ENCODE measurements at regions of chr4 and their contacts with region 1.

Region 1: DNA sequence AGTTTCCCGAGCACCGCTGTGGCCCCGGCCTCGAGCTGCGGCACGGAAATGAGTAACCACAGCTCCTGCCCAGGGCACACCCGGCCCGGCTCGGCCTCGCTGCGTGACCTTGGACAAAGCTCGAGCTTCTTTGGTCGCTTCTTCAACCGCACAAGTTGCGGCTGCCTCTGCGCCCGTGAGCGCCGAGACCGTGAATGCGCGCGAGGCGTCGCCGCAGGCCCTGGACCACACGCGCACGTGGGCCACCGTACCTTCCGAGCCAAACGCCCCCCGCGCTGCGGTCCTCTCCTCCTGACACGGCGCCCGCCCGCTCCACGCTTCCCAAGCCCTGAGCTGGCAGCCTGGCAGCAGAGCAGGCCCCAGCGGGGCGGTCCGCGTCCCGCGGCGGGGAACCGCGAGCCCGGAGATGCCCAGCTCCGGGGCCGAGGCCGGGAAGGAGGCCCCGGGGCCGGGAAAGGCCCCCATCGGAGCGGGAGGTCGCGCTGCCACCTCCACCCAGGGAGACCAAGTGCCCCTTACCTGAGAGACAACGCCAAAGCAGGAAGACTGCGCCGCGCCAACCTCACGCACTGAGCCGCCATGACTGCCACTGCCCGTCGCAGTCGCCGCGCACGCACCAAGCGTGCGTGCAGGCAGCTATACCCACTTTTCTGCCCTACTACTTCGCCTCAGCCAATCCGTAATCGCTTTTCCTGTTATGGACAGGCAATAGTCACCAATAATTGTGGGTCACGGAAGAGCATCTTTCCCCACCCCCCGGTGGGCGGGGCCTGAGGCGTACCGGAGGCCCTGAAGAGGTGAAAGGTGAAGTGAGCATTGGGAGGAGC is at the start of gene GRPEL1:
- DNase-seq: peak; percentile 99
- CTCF ChIP-seq: no peak

Region 2: GRCh38 chr4:6574747-6575502 is 492.7 kb before region 1 on chr4 and contains the start of gene MAN2B2:
- in situ Hi-C with region 1: no loop called
- DNase-seq: peak; percentile 98
- CTCF ChIP-seq: no peak

Region 3: GRCh38 chr4:6709230-6710114 is 358.2 kb before region 1 on chr4 and contains the start of gene MRFAP1L1:
- in situ Hi-C with region 1: loop called (anchors 10 kb)
- DNase-seq: peak; percentile 94
- CTCF ChIP-seq: no peak

Region 4: GRCh38 chr4:6829086-6829485 is 238.6 kb before region 1 on chr4:
- in situ Hi-C with region 1: no loop called
- DNase-seq: no peak
- CTCF ChIP-seq: no peak

Region 5: GRCh38 chr4:6840062-6840976 is 227.3 kb before region 1 on chr4:
- in situ Hi-C with region 1: no loop called
- DNase-seq: no peak
- CTCF ChIP-seq: no peak

Region 6: DNA sequence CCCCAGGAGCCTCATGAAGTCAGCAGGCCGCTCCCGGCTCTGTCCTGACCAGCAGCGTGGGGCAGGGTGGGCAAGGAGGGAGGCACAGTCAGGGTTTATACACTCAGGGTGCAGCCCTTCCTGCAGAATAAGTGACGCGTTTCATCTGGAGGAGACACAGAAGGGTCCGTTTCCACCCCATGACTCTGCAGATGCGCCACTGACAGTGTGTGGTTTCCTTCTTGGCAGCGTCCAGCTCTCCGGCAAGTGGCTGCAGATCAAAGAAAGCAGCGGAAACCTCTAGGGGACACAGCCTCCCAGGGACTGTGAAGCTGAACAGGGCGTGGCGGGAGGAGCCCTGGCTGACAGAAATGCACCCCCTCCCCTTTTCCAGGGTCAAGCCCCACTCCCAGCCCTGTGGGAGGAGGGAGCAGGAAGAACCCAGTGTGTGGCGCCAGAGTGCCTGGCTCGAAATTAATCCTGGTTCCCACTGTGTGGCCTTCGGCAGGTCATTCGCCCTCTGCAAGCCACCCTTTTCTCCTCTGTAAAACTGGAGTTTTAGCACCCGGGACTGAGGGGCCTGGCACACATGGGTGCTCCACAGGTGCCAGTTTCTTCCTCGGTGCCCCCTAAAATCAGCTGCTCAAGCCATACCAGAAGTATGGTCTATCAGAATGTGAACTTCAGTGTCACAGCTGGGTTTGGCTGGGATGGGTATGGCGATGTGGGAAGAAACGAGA is 175.3 kb before region 1 on chr4:
- in situ Hi-C with region 1: loop called (anchors 10 kb)
- DNase-seq: peak; percentile 48
- CTCF ChIP-seq: no peak

Measured in GM13976 (cell line).